AG04450 (cell line): ENCODE measurements at regions of chr5 and their contacts with region 1.

Region 1: GRCh38 chr5:147509041-147509709 is 693 bp downstream of the DPYSL3 start:
- DNase-seq: no peak
- H3K4me3 ChIP-seq: peak overlapping the region; percentile 89
- H3K27ac ChIP-seq: peak overlapping the region; percentile 60
- H3K27me3 ChIP-seq: no peaks in the 10 kb centered on the region
- CTCF ChIP-seq: no peak

Region 2: DNA sequence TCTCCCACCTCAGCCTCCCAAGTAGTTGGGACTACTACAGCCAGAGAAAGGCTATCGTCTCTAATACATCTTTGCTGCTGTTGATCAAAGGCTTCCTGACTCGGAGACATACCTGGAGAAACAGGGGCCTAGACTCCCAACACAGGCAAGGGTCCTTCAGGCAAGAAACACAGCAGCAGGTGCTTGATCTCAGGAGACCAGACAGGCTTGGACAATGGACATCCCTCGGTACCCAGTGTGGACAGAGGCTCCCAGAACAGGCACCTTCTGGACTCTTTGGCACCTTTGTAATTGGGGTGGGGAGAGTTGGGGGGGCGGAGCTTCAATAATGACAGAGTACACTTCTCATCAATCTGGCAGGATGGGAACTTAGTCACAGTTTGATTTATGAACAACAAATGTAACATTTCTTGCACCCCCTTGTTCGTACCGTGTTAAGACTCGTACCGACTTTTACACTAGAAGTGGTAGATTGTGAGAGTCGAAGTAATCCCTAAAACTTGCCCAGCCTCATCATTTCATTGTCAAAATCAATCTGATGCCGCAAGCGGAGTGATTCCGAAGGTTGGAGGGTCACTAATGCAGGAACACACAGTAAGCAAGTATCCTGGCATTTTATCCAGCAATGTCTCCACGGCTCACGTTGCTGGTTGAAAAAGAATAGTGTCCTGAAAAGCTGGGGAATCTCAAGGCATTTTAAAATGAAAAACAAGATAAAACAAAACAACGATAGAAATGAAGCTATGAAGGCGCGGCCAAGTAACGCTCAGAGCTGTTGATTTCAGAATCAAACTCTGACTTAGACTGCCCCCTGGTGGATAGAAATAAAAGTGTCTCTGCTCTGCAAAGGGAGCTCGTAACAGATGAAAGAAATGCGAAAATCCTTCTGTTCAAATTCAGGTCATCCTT is 320.7 kb before region 1 on chr5:
- CTCF ChIA-PET with region 1: no interaction called
- POLR2A ChIA-PET with region 1: no interaction called
- DNase-seq: peak; percentile 38
- H3K4me3 ChIP-seq: no peak overlapping the region
- H3K27ac ChIP-seq: no peak overlapping the region
- H3K27me3 ChIP-seq: no peaks in the 10 kb centered on the region
- CTCF ChIP-seq: peak; percentile 85

Region 3: DNA sequence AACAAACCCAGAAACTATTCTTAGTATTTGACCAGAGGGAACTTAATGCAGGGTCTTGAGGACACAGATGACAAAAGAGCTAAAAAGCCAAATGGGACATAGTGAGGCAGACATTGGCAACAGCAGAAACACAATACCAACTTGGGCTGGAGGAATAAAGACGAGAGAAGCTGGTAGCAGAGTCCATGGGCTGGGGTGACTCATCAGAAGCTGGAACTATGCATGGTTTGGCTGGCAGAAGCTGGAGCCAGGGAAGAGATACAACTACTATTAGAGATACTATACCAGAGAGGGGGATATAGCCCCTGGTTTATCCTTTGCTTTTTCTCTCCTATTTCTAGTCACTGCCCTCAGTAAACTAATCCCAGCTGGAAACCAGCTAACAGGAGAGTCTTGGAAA is 29.9 kb after region 1 on chr5:
- CTCF ChIA-PET with region 1: interaction called, 4 read pairs
- POLR2A ChIA-PET with region 1: interaction called, 10 read pairs
- DNase-seq: no peak
- H3K4me3 ChIP-seq: no peak overlapping the region
- H3K27ac ChIP-seq: no peak overlapping the region
- H3K27me3 ChIP-seq: no peaks in the 10 kb centered on the region
- CTCF ChIP-seq: no peak